ENCODE measurements at regions of chr12 and their contacts with region 1.

Region 1: DNA sequence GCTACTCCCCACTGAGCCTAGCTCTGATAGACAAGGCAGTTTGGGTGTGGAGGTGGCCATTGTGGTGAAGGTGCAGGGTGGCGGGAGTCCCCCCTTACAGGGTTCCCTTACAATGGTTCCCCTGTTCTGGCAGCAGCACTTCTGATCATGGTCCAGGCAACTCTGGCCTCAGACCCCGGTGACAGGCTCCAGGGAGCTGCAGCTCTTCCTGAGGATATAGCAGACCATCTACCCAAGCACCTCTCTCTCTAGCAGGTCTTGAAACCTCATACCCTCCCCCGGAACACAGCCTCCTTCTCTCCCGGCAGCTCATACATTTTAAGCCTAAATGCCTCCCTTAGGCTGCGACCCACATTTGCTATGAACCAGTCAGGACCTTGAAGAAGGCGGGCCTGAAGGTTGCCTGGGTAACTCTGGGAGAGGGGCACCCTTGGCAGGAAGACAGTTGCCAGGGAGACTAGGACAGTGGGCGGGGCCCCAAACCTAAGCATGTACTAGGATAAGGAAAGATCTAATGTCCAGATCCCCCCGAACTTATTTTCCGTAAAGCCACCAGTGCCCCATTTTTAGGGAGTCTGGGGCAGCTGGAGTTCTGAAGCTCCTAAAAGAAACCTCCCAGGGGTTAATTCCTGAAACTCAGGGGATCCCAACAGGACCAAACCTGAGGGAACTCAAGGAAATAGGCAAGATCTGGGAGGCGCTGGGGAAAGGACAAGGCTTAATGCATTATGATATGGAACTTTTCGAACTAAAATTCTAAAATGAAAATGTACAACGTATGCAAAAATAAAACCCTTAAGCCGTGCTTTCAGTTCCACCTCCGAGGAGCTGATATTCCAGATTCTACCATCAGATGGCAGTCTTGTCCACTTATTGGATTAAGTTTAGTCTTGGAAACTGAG is 4.5 kb upstream of the GDF11 start:
- DNase-seq: peak in 1 of 2 experiments; percentile 88
- H3K4me3 ChIP-seq: peak overlapping the region; percentile 45 to 65 (median 56)
- H3K27ac ChIP-seq: peak overlapping the region; percentile 46; the same call in 1 of the 2 replicates
- H3K4me1 ChIP-seq: peaks cover 2 to 23% (median 10%) of the 10 kb centered on the region in 4 experiments; a peak in 6 of 7 replicates
- H3K27me3 ChIP-seq: no peaks in the 10 kb centered on the region
- CTCF ChIP-seq: peak in 2 of 3 experiments; percentile 70 to 84; a peak in 3 of 4 replicates
- EP300 ChIP-seq: no peak
- POLR2A ChIP-seq: peak in 1 of 2 experiments; percentile 61; a peak in 2 of 3 replicates
- RAD21 ChIP-seq: peak; percentile 91 to 92

Region 2: GRCh38 chr12:55681142-55682077 is 57.0 kb before region 1 on chr12:
- CTCF ChIA-PET with region 1: interaction called, 24 read pairs
- POLR2A ChIA-PET with region 1: no interaction called
- DNase-seq: peak; percentile 61 to 83
- H3K4me3 ChIP-seq: peak overlapping the region in 3 of 4 experiments; percentile 6 to 44 (median 21); a peak in 5 of 8 replicates
- H3K27ac ChIP-seq: no peak overlapping the region
- H3K4me1 ChIP-seq: peaks cover 0 to 12% (median 5%) of the 10 kb centered on the region in 4 experiments; a peak in 4 of 7 replicates
- H3K27me3 ChIP-seq: no peaks in the 10 kb centered on the region
- CTCF ChIP-seq: peak; percentile 60 to 68 (median 61)
- EP300 ChIP-seq: no peak
- POLR2A ChIP-seq: peak in 1 of 2 experiments; percentile 54; a peak in 2 of 3 replicates
- RAD21 ChIP-seq: peak; percentile 25 to 48; a peak in 3 of 4 replicates

Region 3: DNA sequence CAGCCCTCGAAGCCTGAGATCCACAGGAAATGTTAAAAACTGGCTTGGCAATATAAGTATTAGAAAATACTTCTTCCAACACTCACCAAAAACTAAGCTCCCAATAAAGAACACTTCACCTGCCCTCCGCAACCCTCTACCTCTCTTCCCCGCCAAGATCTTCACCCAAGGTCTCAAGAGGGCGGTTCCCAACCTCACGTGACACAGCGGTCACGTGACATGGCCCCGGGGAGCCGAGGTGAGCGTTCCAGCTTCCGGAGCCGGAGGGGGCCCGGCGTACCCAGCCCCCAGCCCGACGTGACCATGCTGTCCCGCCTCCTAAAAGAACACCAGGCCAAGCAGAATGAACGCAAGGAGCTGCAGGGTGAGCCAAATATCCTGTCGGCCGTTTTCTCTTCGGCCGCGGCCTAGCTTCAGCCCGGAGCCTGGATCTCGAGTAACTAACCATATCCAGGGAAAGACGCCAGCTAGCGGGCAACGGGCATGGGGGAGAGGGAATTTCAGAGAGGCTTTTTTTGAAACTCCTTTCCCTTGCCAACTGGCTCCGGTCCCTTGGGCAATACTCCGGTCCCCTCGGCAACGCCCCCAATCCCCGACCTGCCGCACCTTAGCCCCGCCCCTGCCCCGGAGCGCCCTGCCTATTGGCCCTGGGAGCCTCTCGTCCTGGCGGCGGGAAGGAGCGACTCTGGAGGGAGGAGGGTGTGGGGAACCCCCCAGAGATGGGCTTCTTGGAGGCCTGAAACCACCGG is 22.4 kb before region 1 on chr12 and contains the start of gene BLOC1S1:
- CTCF ChIA-PET with region 1: interaction called, 229 read pairs
- POLR2A ChIA-PET with region 1: interaction called, 18 read pairs
- DNase-seq: peak in 1 of 2 experiments; percentile 98
- H3K4me3 ChIP-seq: peak within 1 kb of the TSS; percentile 77 to 95 (median 87)
- H3K27ac ChIP-seq: peak within 1 kb of the TSS; percentile 63
- H3K4me1 ChIP-seq: peaks cover 10 to 26% (median 19%) of the 10 kb centered on the region in 4 experiments
- H3K27me3 ChIP-seq: no peaks in the 10 kb centered on the region; a peak in 2 of 7 replicates
- CTCF ChIP-seq: no peak
- EP300 ChIP-seq: peak in 1 of 2 experiments; percentile 85; a peak in 1 of 3 replicates
- POLR2A ChIP-seq: peak; percentile 2 to 64
- RAD21 ChIP-seq: no peak
- total RNA-seq, gene BLOC1S1: 84.3 and 91.1 TPM in 2 replicates

Region 4: DNA sequence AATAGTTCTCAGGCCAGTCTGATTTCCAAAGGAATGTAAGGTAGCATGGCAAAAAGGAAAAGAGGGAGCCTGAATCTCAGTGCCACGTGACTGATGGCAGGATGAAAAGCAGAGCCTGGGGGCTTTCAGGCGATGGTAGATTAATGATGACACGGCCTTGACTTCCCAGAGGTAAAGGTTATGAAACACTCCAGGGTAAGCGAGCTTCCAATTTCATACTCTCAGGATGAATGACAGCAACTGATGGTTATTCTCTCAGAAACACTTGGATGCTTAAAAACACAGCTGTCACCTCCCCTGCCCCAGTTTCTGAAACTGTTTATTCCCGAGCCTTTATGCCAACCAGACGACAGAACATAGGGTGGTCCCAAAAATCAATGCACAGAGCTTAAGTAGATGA is 33.4 kb after region 1 on chr12:
- CTCF ChIA-PET with region 1: interaction called, 19 read pairs
- POLR2A ChIA-PET with region 1: interaction called, 809 read pairs
- DNase-seq: no peak
- H3K4me3 ChIP-seq: no peak overlapping the region
- H3K27ac ChIP-seq: no peak overlapping the region
- H3K4me1 ChIP-seq: no peaks in the 10 kb centered on the region
- H3K27me3 ChIP-seq: no peaks in the 10 kb centered on the region
- CTCF ChIP-seq: no peak
- EP300 ChIP-seq: no peak
- POLR2A ChIP-seq: no peak
- RAD21 ChIP-seq: no peak

Region 5: GRCh38 chr12:55817346-55818139 is 79.2 kb after region 1 on chr12 and contains the starts of genes ORMDL2 and SARNP:
- CTCF ChIA-PET with region 1: interaction called, 224 read pairs
- POLR2A ChIA-PET with region 1: interaction called, 64 read pairs
- DNase-seq: peak; percentile 90 to 99
- H3K4me3 ChIP-seq: peak within 1 kb of the TSS; percentile 95 to 100 (median 96)
- H3K27ac ChIP-seq: peak within 1 kb of the TSS; percentile 91
- H3K4me1 ChIP-seq: peaks cover 4 to 8% (median 6%) of the 10 kb centered on the region in 4 experiments
- H3K27me3 ChIP-seq: no peaks in the 10 kb centered on the region
- CTCF ChIP-seq: no peak
- EP300 ChIP-seq: no peak
- POLR2A ChIP-seq: peak; percentile 62 to 93
- RAD21 ChIP-seq: no peak
- total RNA-seq, gene ORMDL2: 34.1 and 39.0 TPM in 2 replicates
- total RNA-seq, gene SARNP: 114 and 117 TPM in 2 replicates

Region 6: DNA sequence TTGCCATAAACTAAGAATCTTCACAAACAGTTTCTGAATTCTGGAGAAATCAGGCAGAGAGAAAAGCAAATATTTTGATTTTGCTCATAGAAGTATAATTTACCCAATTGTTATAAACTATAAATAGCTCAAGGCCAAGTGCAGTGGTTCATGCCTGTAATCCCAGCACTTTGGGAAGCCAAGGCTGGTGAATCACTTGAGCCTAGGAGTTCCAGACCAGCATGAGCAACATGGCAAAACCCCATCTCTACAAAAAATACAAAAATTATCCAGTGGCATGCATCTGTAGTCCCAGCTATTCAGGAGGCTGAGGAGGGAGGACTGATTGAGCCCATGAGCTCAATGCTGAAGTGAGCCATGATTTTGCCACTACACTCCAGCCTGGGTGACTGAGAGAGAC is 123.9 kb after region 1 on chr12:
- CTCF ChIA-PET with region 1: no interaction called
- POLR2A ChIA-PET with region 1: no interaction called
- DNase-seq: no peak
- H3K4me3 ChIP-seq: no peak overlapping the region
- H3K27ac ChIP-seq: no peak overlapping the region
- H3K4me1 ChIP-seq: no peaks in the 10 kb centered on the region
- H3K27me3 ChIP-seq: no peaks in the 10 kb centered on the region
- CTCF ChIP-seq: no peak
- EP300 ChIP-seq: no peak
- POLR2A ChIP-seq: no peak
- RAD21 ChIP-seq: no peak

Region 7: DNA sequence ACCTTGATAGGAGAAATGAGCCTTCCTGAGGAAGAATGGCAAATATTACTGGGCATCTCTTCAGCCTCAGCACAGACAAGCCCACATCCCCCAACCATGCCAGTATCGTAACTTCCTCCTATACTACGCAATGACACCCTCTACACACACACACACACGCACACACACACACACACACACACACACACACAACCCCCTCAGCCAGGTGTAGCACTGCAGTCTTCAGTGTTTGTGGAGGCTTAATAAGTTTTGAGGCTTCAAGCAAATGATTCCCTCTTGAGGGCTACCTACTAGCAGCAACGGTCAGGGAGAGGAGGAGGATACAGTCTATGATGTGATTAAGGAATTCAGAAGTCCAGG is 194.2 kb after region 1 on chr12:
- CTCF ChIA-PET with region 1: interaction called, 27 read pairs
- POLR2A ChIA-PET with region 1: interaction called, 24 read pairs
- DNase-seq: no peak
- H3K4me3 ChIP-seq: peak overlapping the region; percentile 47 to 75 (median 66)
- H3K27ac ChIP-seq: no peak overlapping the region
- H3K4me1 ChIP-seq: peaks cover 4 to 20% (median 11%) of the 10 kb centered on the region in 4 experiments; a peak in 6 of 7 replicates
- H3K27me3 ChIP-seq: peaks cover 0 to 21% (median 14%) of the 10 kb centered on the region in 4 experiments; a peak in 6 of 7 replicates
- CTCF ChIP-seq: no peak
- EP300 ChIP-seq: no peak
- POLR2A ChIP-seq: no peak
- RAD21 ChIP-seq: no peak